ENCODE measurements at regions of chr2 and their contacts with region 1.

Region 1: GRCh38 chr2:218995972-218996711 is 2.9 kb upstream of the CRYBA2 start:
- DNase-seq: peak in 1 of 2 experiments; percentile 87
- H3K4me3 ChIP-seq: peak overlapping the region; percentile 55; the same call in 1 of the 2 replicates
- H3K27ac ChIP-seq: no peak overlapping the region
- H3K4me1 ChIP-seq: peaks cover 9% of the 10 kb centered on the region; the same call in 1 of the 2 replicates
- H3K27me3 ChIP-seq: peaks cover 37% of the 10 kb centered on the region; the same call in 1 of the 2 replicates
- CTCF ChIP-seq: peak; percentile 90

Region 2: GRCh38 chr2:219057709-219058540 is 61.8 kb after region 1 on chr2:
- CTCF ChIA-PET with region 1: no interaction called
- POLR2A ChIA-PET with region 1: no interaction called
- intact Hi-C with region 1: loop called (anchors 5 kb)
- DNase-seq: peak in 1 of 2 experiments; percentile 69
- H3K4me3 ChIP-seq: no peak overlapping the region
- H3K27ac ChIP-seq: no peak overlapping the region
- H3K4me1 ChIP-seq: no peaks in the 10 kb centered on the region
- H3K27me3 ChIP-seq: peaks cover 70% of the 10 kb centered on the region
- CTCF ChIP-seq: peak; percentile 80

Region 3: DNA sequence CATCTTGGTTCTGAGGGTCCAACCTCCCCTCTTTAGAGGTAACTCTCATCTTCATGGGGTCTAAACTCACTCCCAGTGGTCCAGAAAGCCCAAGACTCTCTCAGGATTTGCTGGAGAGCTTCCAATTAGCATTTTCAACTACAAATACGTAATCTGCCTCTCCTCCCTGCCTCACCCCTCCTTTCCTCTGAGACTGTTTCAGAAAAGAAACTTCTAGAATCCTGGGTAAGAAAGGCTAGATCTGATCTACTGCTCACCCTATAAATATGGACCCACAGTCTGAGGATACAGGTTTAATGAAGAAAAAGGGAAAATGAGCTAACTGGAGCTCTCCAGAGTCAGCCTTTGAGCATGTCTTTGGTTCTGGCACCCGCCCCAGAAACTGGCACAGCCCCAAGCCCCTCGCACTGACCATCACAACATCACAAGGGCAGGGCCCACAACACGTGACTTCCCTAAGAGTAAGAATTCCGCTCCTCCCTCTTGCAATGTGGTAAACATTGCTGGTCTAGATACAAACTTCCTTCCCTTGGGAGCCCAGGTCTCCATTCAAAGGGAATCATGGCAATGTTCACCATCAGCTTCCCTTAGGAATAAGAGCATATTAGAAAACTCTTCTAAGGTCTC is 86.3 kb after region 1 on chr2:
- CTCF ChIA-PET with region 1: no interaction called
- POLR2A ChIA-PET with region 1: no interaction called
- intact Hi-C with region 1: no loop called
- DNase-seq: no peak
- H3K4me3 ChIP-seq: no peak overlapping the region
- H3K27ac ChIP-seq: no peak overlapping the region
- H3K4me1 ChIP-seq: no peaks in the 10 kb centered on the region
- H3K27me3 ChIP-seq: no peaks in the 10 kb centered on the region
- CTCF ChIP-seq: no peak

Region 4: GRCh38 chr2:220949466-220949865 is 1953.3 kb after region 1 on chr2:
- CTCF ChIA-PET with region 1: no interaction called
- POLR2A ChIA-PET with region 1: no interaction called
- intact Hi-C with region 1: no loop called
- DNase-seq: no peak
- H3K4me3 ChIP-seq: no peak overlapping the region
- H3K27ac ChIP-seq: no peak overlapping the region
- H3K4me1 ChIP-seq: no peaks in the 10 kb centered on the region
- H3K27me3 ChIP-seq: no peaks in the 10 kb centered on the region
- CTCF ChIP-seq: no peak